ENCODE measurements at regions of chr4 and their contacts with region 1.

Region 1: DNA sequence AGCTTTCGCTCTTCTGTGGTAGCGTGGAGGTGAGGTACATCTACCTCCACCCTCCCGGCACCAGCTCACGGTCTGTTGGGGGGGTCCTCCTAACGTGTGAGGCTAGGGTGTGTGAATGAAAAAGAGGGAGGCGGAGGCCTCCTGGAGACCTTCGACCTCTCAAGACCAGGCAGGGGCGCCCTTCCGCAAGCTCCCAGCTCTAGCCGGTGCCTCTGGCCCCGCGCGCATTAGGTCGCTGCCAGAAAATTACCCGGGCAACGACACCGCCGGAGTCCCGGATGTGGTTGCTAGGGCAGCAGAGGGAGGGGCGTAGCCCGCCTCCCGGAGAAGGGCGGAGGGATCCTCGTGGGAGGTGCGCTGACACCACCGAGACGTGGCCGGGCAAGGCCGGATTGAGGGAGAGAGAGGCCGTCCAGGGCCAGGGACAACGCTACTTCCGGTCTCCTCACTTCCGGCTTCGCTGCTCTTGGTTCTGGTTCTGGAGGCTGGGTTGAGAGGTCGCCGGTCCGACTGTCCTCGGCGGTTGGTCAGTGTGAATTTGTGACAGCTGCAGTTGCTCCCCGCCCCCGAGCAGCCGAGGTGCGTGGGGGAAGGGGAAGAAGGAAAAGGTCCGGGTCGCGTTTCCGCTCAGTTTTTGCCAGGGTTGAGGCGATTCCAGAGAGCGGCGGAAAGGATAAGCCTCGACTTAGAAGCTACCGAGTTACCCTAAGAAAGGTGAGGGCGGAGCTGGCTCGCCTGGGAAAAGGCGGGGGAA is at the starts of genes ARFIP1 and TIGD4:
- DNase-seq: peak; percentile 87 to 96 (median 94)
- ATAC-seq: peak; percentile 83
- H3K4me3 ChIP-seq: peak within 1 kb of the TSS; percentile 82 to 97
- H3K4me3 Mint-ChIP-seq: peak within 1 kb of the TSS; percentile 99
- H3K27ac ChIP-seq: peak within 1 kb of the TSS; percentile 77 to 86
- H3K27ac Mint-ChIP-seq: peak within 1 kb of the TSS; percentile 96
- H3K4me1 ChIP-seq: peaks cover 25% of the 10 kb centered on the region
- H3K4me1 Mint-ChIP-seq: peaks cover 45% of the 10 kb centered on the region
- H3K27me3 ChIP-seq: peaks cover 0 to 4% of the 10 kb centered on the region in 2 experiments
- H3K27me3 Mint-ChIP-seq: no peaks in the 10 kb centered on the region
- CTCF ChIP-seq: no peak
- total RNA-seq, gene ARFIP1: 1.9 to 2.8 TPM
- total RNA-seq, gene TIGD4: 0.11 TPM in 1 of 2 experiments, not detected in the other

Region 2: DNA sequence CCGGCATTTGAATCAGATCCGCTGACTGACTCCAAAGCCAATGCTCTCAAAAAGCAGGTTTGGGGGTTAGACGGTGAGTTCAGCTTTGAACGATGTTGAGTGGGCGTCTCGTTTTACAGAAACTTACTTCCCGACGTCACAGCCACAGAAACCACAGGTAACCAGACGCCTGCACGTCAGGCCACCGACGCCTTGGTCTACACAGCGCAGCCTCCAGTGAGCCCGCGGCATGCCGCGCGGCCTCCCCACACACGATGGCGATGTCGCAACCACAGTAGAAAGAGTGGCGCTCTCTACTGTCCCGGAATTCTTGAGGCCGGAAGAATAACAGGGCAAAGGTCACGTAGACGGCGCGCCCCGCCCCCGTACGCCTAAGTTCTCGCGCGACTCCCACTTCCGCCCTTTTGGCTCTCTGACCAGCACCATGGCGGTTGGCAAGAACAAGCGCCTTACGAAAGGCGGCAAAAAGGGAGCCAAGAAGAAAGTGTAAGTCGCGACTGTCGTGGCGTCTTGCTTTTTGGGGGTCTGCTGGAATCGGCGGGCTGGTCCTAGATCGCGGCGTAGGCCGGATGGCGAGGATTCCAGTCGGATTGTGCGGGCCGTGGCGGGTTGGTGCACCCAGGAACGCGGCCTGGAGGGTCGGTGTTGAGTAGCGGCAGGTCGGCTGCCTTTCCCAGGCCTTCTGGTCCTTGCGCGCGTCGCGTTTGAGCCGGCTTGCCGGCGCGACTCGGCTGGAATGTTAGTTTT is 1680.3 kb before region 1 on chr4 and contains the start of gene RPS3A:
- CTCF ChIA-PET with region 1: no interaction called
- POLR2A ChIA-PET with region 1: interaction called, 3 read pairs
- intact Hi-C with region 1: loop called (anchors 1 to 5 kb)
- DNase-seq: peak; percentile 94 to 99 (median 98)
- ATAC-seq: peak; percentile 90
- H3K4me3 ChIP-seq: peak within 1 kb of the TSS; percentile 85 to 97
- H3K4me3 Mint-ChIP-seq: peak within 1 kb of the TSS; percentile 97
- H3K27ac ChIP-seq: peak within 1 kb of the TSS; percentile 88 to 96
- H3K27ac Mint-ChIP-seq: peak within 1 kb of the TSS; percentile 98
- H3K4me1 ChIP-seq: peaks cover 29% of the 10 kb centered on the region
- H3K4me1 Mint-ChIP-seq: peaks cover 35% of the 10 kb centered on the region
- H3K27me3 ChIP-seq: peaks cover 0 to 2% of the 10 kb centered on the region in 2 experiments
- H3K27me3 Mint-ChIP-seq: no peaks in the 10 kb centered on the region
- CTCF ChIP-seq: peak; percentile 84
- total RNA-seq, gene RPS3A: 3,746 to 3,978 TPM

Region 3: DNA sequence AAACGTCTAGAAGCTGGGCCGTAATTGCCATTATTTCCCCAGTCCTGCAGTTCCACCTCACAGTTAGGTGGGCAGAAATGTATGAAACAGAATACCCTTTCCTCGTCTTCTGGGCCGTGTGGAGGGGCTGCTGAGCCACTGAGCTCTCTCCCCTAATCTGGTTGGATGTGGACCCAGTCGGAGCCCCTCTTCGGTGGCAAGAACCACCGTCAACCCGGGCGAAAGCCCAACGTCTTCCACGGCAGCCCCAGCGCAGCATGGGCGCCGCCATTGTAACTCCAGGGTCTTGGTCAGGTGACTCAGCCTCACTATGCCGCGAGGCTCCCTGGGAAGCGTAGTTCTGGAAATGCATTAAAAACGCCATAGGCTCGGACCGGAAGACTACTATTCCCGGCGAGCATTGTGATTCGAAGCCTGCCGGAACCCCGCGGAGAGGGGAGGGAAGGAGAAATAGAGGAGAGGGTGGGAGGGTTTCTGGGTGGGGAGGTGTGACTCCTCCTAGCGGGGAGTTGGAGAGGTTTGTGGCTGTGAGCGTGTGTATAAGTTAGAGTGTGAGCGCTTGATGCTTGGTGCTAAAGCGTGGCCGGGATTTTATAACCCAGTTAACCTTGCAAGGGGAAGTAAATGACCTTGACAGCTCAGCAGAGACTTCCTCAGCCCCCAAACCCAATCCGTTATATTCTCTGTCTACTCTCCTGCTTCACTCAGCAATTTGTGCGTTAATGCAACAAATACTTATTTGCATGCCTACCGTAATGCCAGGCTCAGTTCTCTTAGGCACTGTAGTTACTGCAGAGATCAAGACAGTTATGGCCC is 1018.8 kb before region 1 on chr4 and contains the start of gene GATB:
- CTCF ChIA-PET with region 1: no interaction called
- POLR2A ChIA-PET with region 1: no interaction called
- intact Hi-C with region 1: loop called (anchors 1 to 10 kb)
- DNase-seq: peak; percentile 82 to 97 (median 92)
- ATAC-seq: peak; percentile 98
- H3K4me3 ChIP-seq: peak within 1 kb of the TSS; percentile 73 to 82
- H3K4me3 Mint-ChIP-seq: peak within 1 kb of the TSS; percentile 97
- H3K27ac ChIP-seq: peak within 1 kb of the TSS; percentile 59 to 75
- H3K27ac Mint-ChIP-seq: peak within 1 kb of the TSS; percentile 98
- H3K4me1 ChIP-seq: peaks cover 15% of the 10 kb centered on the region
- H3K4me1 Mint-ChIP-seq: peaks cover 18% of the 10 kb centered on the region
- H3K27me3 ChIP-seq: no peaks in the 10 kb centered on the region
- H3K27me3 Mint-ChIP-seq: no peaks in the 10 kb centered on the region
- CTCF ChIP-seq: peak; percentile 51
- total RNA-seq, gene GATB: 3.3 to 5.1 TPM

Region 4: DNA sequence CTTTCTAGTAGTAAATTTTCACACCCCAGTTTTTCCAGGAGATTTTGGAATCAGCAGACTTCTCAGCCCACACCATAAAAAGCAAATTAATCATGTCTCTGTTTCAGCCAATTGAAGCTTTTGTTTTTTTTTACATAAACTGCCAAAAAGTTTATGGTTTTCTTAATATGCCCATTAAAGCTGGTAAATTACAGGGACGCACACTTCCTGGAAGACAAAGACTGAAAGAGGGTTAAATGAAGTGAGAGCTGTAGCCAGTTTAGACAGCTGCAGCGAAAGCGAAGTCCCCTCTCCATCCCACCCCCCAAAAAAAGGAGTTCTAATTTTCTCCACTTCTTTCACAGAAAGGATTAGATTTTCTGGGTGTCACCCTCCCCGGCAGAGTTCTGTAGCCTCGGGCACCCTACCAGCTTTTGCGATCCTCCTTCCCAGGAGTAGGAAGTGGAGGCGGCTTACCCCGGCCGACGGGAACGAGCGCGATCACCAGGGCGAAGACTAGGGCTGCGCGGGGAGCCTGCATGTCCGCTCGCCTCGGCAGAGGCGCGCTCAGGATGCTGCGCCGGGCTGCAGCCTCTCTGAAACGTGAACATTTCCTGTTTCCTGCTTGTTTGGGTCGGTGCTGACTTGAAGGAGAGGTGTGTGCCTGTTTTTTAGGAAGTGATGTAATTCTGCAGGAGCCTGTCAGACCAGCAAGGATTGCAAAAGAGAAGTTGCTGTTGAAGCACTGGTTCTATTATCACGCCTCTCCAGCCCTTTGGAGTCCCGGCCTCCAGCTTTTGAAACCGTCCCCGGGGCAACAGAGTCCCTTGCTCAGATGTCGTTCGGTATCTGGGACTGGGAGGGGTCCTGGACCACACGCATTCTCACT is 100.0 kb before region 1 on chr4 and contains the start of gene TMEM154:
- CTCF ChIA-PET with region 1: interaction called, 3 read pairs
- POLR2A ChIA-PET with region 1: interaction called, 5 read pairs
- intact Hi-C with region 1: loop called (anchors 1 to 2 kb)
- DNase-seq: peak; percentile 44 to 86 (median 71)
- ATAC-seq: peak; percentile 97
- H3K4me3 ChIP-seq: peak within 1 kb of the TSS; percentile 67 to 68
- H3K4me3 Mint-ChIP-seq: peak within 1 kb of the TSS; percentile 93
- H3K27ac ChIP-seq: peak within 1 kb of the TSS; percentile 58 to 67
- H3K27ac Mint-ChIP-seq: peak within 1 kb of the TSS; percentile 95
- H3K4me1 ChIP-seq: peaks cover 12% of the 10 kb centered on the region
- H3K4me1 Mint-ChIP-seq: peaks cover 46% of the 10 kb centered on the region
- H3K27me3 ChIP-seq: no peaks in the 10 kb centered on the region
- H3K27me3 Mint-ChIP-seq: no peaks in the 10 kb centered on the region
- CTCF ChIP-seq: no peak
- total RNA-seq, gene TMEM154: 10.0 TPM

Region 5: GRCh38 chr4:153071958-153072610 is 292.4 kb after region 1 on chr4:
- CTCF ChIA-PET with region 1: no interaction called
- POLR2A ChIA-PET with region 1: no interaction called
- intact Hi-C with region 1: no loop called
- DNase-seq: no peak
- ATAC-seq: no peak
- H3K4me3 ChIP-seq: no peak overlapping the region
- H3K4me3 Mint-ChIP-seq: no peak overlapping the region
- H3K27ac ChIP-seq: no peak overlapping the region
- H3K27ac Mint-ChIP-seq: no peak overlapping the region
- H3K4me1 ChIP-seq: no peaks in the 10 kb centered on the region
- H3K4me1 Mint-ChIP-seq: no peaks in the 10 kb centered on the region
- H3K27me3 ChIP-seq: no peaks in the 10 kb centered on the region
- H3K27me3 Mint-ChIP-seq: no peaks in the 10 kb centered on the region
- CTCF ChIP-seq: no peak

Region 6: GRCh38 chr4:153083447-153083947 is 303.8 kb after region 1 on chr4:
- CTCF ChIA-PET with region 1: interaction called, 4 read pairs
- POLR2A ChIA-PET with region 1: no interaction called
- intact Hi-C with region 1: loop called in 1 of 2 experiments (anchors 2 kb)
- DNase-seq: peak in 8 of 9 experiments; percentile 14 to 82 (median 47)
- ATAC-seq: peak; percentile 42
- H3K4me3 ChIP-seq: no peak overlapping the region
- H3K4me3 Mint-ChIP-seq: no peak overlapping the region
- H3K27ac ChIP-seq: no peak overlapping the region
- H3K27ac Mint-ChIP-seq: no peak overlapping the region
- H3K4me1 ChIP-seq: peaks cover 57% of the 10 kb centered on the region
- H3K4me1 Mint-ChIP-seq: peaks cover 46% of the 10 kb centered on the region
- H3K27me3 ChIP-seq: no peaks in the 10 kb centered on the region
- H3K27me3 Mint-ChIP-seq: no peaks in the 10 kb centered on the region
- CTCF ChIP-seq: peak; percentile 77

Region 7: GRCh38 chr4:153127760-153128494 is 348.2 kb after region 1 on chr4:
- CTCF ChIA-PET with region 1: interaction called, 9 read pairs
- POLR2A ChIA-PET with region 1: no interaction called
- intact Hi-C with region 1: loop called in 1 of 2 experiments (anchors 5 kb)
- DNase-seq: peak; percentile 76 to 91 (median 87)
- ATAC-seq: peak; percentile 94
- H3K4me3 ChIP-seq: no peak overlapping the region
- H3K4me3 Mint-ChIP-seq: no peak overlapping the region
- H3K27ac ChIP-seq: no peak overlapping the region
- H3K27ac Mint-ChIP-seq: peak overlapping the region; percentile 46
- H3K4me1 ChIP-seq: peaks cover 3% of the 10 kb centered on the region
- H3K4me1 Mint-ChIP-seq: peaks cover 6% of the 10 kb centered on the region
- H3K27me3 ChIP-seq: no peaks in the 10 kb centered on the region
- H3K27me3 Mint-ChIP-seq: no peaks in the 10 kb centered on the region
- CTCF ChIP-seq: peak; percentile 92

Region 8: DNA sequence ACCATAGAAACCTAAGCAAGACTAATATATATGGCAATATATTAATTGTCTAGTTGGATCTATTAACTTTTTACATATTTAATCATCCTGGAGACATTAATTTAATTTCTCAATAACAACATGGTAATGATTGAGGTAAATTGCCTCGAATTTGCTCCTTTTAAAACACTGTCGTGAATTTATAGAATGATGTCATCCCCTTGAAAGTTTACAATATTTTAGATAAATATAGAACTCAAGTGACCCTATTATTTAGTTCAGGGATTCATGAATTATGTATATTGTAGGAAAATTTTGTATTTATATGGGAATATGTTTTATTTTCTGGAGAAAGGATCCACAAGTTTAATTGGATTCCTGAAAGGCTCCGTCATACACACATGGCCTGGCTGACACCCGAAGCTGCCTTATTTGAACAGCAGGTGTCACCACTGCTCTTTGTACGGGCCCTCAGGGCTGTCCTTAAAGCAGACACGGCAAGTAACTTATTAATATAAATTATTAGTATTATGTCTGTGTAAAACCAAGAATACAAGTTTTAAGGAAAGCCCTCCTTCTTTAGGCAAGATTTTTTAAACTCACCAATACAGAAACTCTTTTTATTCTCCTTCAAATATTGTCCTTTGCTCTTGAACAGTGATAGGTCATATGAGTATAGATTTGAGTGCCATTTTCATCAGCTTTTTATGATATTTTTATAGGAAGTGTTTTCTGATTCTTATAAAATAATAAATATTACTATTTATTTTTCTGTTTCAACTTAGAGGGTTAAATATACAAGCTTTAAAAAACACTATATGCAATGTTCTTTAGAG is 1772.4 kb after region 1 on chr4:
- CTCF ChIA-PET with region 1: no interaction called
- POLR2A ChIA-PET with region 1: no interaction called
- intact Hi-C with region 1: loop called in 1 of 2 experiments (anchors 5 kb)
- DNase-seq: peak; percentile 35 to 84 (median 70)
- ATAC-seq: peak; percentile 45
- H3K4me3 ChIP-seq: no peak overlapping the region
- H3K4me3 Mint-ChIP-seq: no peak overlapping the region
- H3K27ac ChIP-seq: no peak overlapping the region
- H3K27ac Mint-ChIP-seq: no peak overlapping the region
- H3K4me1 ChIP-seq: peaks cover 16% of the 10 kb centered on the region
- H3K4me1 Mint-ChIP-seq: peaks cover 29% of the 10 kb centered on the region
- H3K27me3 ChIP-seq: no peaks in the 10 kb centered on the region
- H3K27me3 Mint-ChIP-seq: no peaks in the 10 kb centered on the region
- CTCF ChIP-seq: peak; percentile 96

Measured in CD8-positive, alpha-beta T cell (primary cell).